SK-N-SH (cell line): ENCODE measurements at regions of chr17 and their contacts with region 1.

Region 1: GRCh38 chr17:81977211-81978027 is at the start of gene ASPSCR1:
- DNase-seq: peak; percentile 99
- H3K4me3 ChIP-seq: peak within 1 kb of the TSS; percentile 69 to 95
- H3K27ac ChIP-seq: peak within 1 kb of the TSS; percentile 65 to 83
- H3K4me1 ChIP-seq: peaks cover 10 to 18% of the 10 kb centered on the region in 2 experiments; a peak in 2 of 4 replicates
- H3K27me3 ChIP-seq: no peaks in the 10 kb centered on the region
- CTCF ChIP-seq: no peak
- EP300 ChIP-seq: peak in 1 of 2 experiments; percentile 48; a peak in 2 of 4 replicates
- RAD21 ChIP-seq: no peak
- polyA plus RNA-seq, gene ASPSCR1: 27.5 and 36.2 TPM in 2 replicates

Region 2: DNA sequence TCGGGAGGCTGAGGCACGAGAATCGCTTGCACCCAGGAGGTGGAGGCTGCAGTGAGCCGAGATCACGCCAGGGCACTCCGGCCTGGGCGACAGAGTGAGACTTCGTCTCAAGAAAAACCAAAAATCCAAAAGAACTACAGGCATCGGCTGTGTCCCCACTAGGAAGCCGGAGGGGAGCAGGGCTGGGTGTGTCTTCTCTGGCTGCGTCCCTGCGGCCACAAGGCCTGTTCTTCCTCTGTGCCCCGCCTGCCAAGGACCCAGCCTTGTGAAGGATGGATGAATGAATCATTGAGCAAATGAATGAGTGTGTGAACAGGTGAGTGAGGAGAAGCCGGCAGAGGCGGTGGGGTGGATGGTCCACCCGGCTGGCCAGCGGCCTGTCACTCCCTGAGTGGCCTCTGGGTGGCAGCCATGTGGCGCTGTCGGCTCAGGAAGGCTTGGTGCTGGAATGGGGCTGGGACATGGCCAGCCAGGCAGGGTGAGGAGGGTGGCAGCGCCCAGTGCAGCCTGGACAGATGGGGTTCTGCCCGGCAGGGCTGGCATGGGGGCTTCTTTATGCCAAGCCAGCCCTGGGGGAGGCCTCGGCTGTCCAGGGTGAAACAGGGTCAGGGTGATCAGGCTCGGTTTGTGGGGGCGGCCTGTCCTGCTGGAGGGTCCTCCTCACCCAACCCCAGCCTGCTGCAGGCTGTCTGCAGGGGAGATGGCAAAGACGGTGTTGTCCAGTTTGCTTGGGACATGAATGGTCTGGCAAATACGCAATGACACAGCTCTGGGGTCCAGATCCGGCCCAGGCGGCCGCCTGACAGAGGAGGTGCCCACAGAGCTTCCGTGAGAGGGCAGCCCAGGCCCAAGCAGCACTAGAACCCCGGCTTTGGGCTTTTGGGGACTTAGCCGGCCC is 243.7 kb before region 1 on chr17:
- CTCF ChIA-PET with region 1: no interaction called
- POLR2A ChIA-PET with region 1: no interaction called
- DNase-seq: peak; percentile 100
- H3K4me3 ChIP-seq: no peak overlapping the region; a peak in 1 of 4 replicates
- H3K27ac ChIP-seq: no peak overlapping the region
- H3K4me1 ChIP-seq: peaks cover 0 to 5% of the 10 kb centered on the region in 2 experiments; a peak in 1 of 4 replicates
- H3K27me3 ChIP-seq: no peaks in the 10 kb centered on the region; the same call in 1 of the 2 replicates
- CTCF ChIP-seq: peak; percentile 96
- EP300 ChIP-seq: no peak
- RAD21 ChIP-seq: peak; percentile 100

Region 3: GRCh38 chr17:81854974-81855774 is 122.2 kb before region 1 on chr17:
- CTCF ChIA-PET with region 1: no interaction called
- POLR2A ChIA-PET with region 1: no interaction called
- DNase-seq: peak; percentile 39
- H3K4me3 ChIP-seq: no peak overlapping the region
- H3K27ac ChIP-seq: no peak overlapping the region
- H3K4me1 ChIP-seq: peaks cover 17 to 18% of the 10 kb centered on the region in 2 experiments
- H3K27me3 ChIP-seq: no peaks in the 10 kb centered on the region
- CTCF ChIP-seq: 0 out of 2 replicates have a peak, but pooled peaks have one; percentile 14
- EP300 ChIP-seq: no peak
- RAD21 ChIP-seq: 0 out of 2 replicates have a peak, but pooled peaks have one; percentile 22

Region 4: GRCh38 chr17:81991684-81992305 is 14.4 kb after region 1 on chr17:
- CTCF ChIA-PET with region 1: interaction called, 12 read pairs
- POLR2A ChIA-PET with region 1: interaction called, 6 read pairs
- DNase-seq: peak; percentile 81
- H3K4me3 ChIP-seq: no peak overlapping the region
- H3K27ac ChIP-seq: peak overlapping the region in 1 of 2 experiments; percentile 91; a peak in 2 of 4 replicates
- H3K4me1 ChIP-seq: peaks cover 0 to 25% of the 10 kb centered on the region in 2 experiments; a peak in 1 of 4 replicates
- H3K27me3 ChIP-seq: no peaks in the 10 kb centered on the region
- CTCF ChIP-seq: no peak
- EP300 ChIP-seq: no peak
- RAD21 ChIP-seq: peak; percentile 27; the same call in 1 of the 2 replicates